Activated CD4-positive, alpha-beta T cell treated with anti-CD3 and anti-CD28 coated beads, Interleukin-2, amount 10 ng/mL, durations not matched to agents 24 days and 14 days (primary cell): ENCODE measurements at regions of chr5 and their contacts with region 1.

Region 1: GRCh38 chr5:40223884-40224402 is 455.8 kb upstream of the PTGER4 start:
- DNase-seq: peak; percentile 82
- H3K4me3 Mint-ChIP-seq: peak overlapping the region; percentile 58
- H3K27ac Mint-ChIP-seq: peak overlapping the region; percentile 90
- H3K4me1 Mint-ChIP-seq: peaks cover 43% of the 10 kb centered on the region
- H3K27me3 Mint-ChIP-seq: no peaks in the 10 kb centered on the region

Region 2: DNA sequence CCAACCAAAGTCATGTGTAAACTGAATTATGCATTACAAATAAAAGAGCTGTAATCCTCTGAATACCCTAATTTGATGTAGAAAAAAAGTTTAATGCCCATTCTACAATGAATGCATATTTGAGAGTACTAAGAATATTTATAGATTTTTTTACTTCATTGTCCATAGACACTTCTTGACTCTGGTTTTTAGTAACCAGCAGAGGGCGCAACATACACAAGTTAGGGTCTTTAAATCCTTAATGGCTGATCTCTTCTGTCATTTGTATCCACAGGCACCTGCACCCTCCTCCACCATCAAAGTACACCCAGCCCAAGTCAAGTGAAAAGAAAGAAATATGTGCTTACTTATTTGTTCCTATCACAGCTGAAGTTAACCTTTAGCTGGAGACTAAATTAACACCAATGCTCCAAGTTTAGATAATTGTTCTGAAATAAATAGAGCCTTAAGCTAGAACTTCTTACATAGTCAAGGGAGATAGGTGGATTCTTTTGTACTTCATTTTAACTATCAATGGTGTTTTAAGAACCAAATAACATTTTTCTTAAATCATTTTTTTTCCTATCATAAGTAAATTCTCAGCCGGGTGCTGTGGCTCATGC is 275.0 kb before region 1 on chr5:
- intact Hi-C with region 1: loop called (anchors 5 kb)
- DNase-seq: peak; percentile 90
- H3K4me3 Mint-ChIP-seq: no peak overlapping the region
- H3K27ac Mint-ChIP-seq: peak overlapping the region; percentile 7
- H3K4me1 Mint-ChIP-seq: peaks cover 3% of the 10 kb centered on the region
- H3K27me3 Mint-ChIP-seq: peaks cover 2% of the 10 kb centered on the region

Region 3: GRCh38 chr5:40052808-40053207 is 171.1 kb before region 1 on chr5:
- intact Hi-C with region 1: no loop called
- DNase-seq: no peak
- H3K4me3 Mint-ChIP-seq: no peak overlapping the region
- H3K27ac Mint-ChIP-seq: no peak overlapping the region
- H3K4me1 Mint-ChIP-seq: no peaks in the 10 kb centered on the region
- H3K27me3 Mint-ChIP-seq: peaks cover 2% of the 10 kb centered on the region

Region 4: GRCh38 chr5:40258222-40258621 is 34.3 kb after region 1 on chr5:
- intact Hi-C with region 1: loop called (anchors 5 kb)
- DNase-seq: peak; percentile 71
- H3K4me3 Mint-ChIP-seq: peak overlapping the region; percentile 39
- H3K27ac Mint-ChIP-seq: peak overlapping the region; percentile 72
- H3K4me1 Mint-ChIP-seq: peaks cover 11% of the 10 kb centered on the region
- H3K27me3 Mint-ChIP-seq: no peaks in the 10 kb centered on the region

Region 5: GRCh38 chr5:40356248-40356647 is 132.3 kb after region 1 on chr5:
- intact Hi-C with region 1: no loop called
- DNase-seq: no peak
- H3K4me3 Mint-ChIP-seq: no peak overlapping the region
- H3K27ac Mint-ChIP-seq: no peak overlapping the region
- H3K4me1 Mint-ChIP-seq: peaks cover 6% of the 10 kb centered on the region
- H3K27me3 Mint-ChIP-seq: no peaks in the 10 kb centered on the region

Region 6: GRCh38 chr5:40383749-40384651 is 160.1 kb after region 1 on chr5:
- intact Hi-C with region 1: loop called (anchors 1 kb)
- DNase-seq: peak; percentile 80
- H3K4me3 Mint-ChIP-seq: peak overlapping the region; percentile 63
- H3K27ac Mint-ChIP-seq: peak overlapping the region; percentile 86
- H3K4me1 Mint-ChIP-seq: peaks cover 70% of the 10 kb centered on the region
- H3K27me3 Mint-ChIP-seq: no peaks in the 10 kb centered on the region

Region 7: DNA sequence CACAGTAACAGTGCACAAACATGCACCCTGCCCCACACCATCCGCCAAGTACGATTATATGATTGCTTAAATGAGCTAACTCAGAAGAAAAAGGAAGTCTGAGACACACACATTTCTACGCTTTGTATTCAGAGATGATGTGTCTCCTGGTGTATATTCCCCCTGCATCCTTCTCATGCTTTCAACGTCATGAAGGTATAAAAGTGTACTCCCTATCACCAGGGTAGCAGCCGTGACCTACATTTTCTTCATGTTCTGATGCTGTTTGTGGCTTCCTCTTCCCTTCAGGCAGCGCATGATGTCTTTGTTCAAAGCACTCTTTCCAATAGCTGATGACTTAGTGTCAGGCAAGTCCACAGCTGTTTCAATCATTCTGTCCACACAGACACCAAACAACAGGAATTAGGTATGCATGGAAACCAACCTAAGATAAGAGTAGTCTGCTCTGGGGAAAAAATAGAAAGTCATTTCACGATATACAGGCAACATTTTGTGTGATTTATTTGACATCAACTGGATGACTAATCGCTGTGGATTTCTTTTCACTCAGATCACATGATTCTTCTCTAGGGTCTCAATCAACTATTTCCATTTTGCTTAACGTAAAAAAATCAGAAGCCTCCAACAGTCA is 186.4 kb after region 1 on chr5:
- intact Hi-C with region 1: loop called (anchors 1 kb)
- DNase-seq: peak; percentile 93
- H3K4me3 Mint-ChIP-seq: peak overlapping the region; percentile 79
- H3K27ac Mint-ChIP-seq: peak overlapping the region; percentile 93
- H3K4me1 Mint-ChIP-seq: peaks cover 51% of the 10 kb centered on the region
- H3K27me3 Mint-ChIP-seq: no peaks in the 10 kb centered on the region

Region 8: GRCh38 chr5:40486437-40487275 is 262.7 kb after region 1 on chr5:
- intact Hi-C with region 1: loop called (anchors 1 kb)
- DNase-seq: peak; percentile 89
- H3K4me3 Mint-ChIP-seq: peak overlapping the region; percentile 45
- H3K27ac Mint-ChIP-seq: peak overlapping the region; percentile 89
- H3K4me1 Mint-ChIP-seq: peaks cover 55% of the 10 kb centered on the region
- H3K27me3 Mint-ChIP-seq: no peaks in the 10 kb centered on the region

Region 9: GRCh38 chr5:40679155-40679913 is 455.4 kb after region 1 on chr5:
- intact Hi-C with region 1: loop called (anchors 1 kb)
- DNase-seq: peak; percentile 98
- H3K4me3 Mint-ChIP-seq: peak overlapping the region; percentile 99
- H3K27ac Mint-ChIP-seq: peak overlapping the region; percentile 99
- H3K4me1 Mint-ChIP-seq: peaks cover 48% of the 10 kb centered on the region
- H3K27me3 Mint-ChIP-seq: no peaks in the 10 kb centered on the region